Sigmoid colon (tissue), 7 donors: ENCODE measurements at regions of chr10 and their contacts with region 1.

Region 1: DNA sequence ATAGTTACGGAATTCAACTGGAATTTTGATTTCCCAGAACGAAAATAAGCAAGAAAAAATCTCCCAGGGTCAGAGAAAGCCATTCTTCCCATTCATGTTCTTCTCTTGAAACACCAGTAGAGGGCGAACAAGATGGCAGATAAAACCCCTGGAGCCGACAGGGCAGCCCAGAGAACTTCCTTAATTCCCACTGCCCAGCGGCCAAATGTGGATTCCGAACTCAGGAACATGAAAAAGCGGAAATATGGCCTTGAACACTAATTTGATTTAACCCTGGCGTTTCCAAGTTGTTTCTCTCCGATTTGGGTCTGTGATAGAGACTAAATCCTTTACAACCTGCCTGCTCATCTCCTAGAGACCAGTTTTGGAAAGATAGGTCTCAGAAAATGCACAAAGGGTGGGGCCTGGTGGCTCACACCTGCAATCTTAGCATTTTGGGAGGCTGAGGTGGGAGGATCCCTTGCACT is 100.7 kb upstream of the WAC start:
- DNase-seq: peak; percentile 77
- H3K4me3 ChIP-seq: no peak overlapping the region
- H3K27ac ChIP-seq: no peak overlapping the region
- H3K4me1 ChIP-seq: peaks cover 0 to 3% (median 2%) of the 10 kb centered on the region in 4 donors
- H3K27me3 ChIP-seq: no peaks in the 10 kb centered on the region
- CTCF ChIP-seq: peak in 3 of 4 experiments; percentile 67 to 83 (median 68)
- EP300 ChIP-seq: no peak
- POLR2A ChIP-seq: no peak

Region 2: GRCh38 chr10:28587970-28588290 is 155.7 kb after region 1 on chr10:
- intact Hi-C with region 1: loop called (anchors 5 kb)
- DNase-seq: no peak
- H3K4me3 ChIP-seq: no peak overlapping the region
- H3K27ac ChIP-seq: peak overlapping the region; percentile 36 to 62 (median 50)
- H3K4me1 ChIP-seq: peaks cover 0 to 48% (median 29%) of the 10 kb centered on the region in 4 donors
- H3K27me3 ChIP-seq: no peaks in the 10 kb centered on the region
- CTCF ChIP-seq: no peak
- EP300 ChIP-seq: no peak
- POLR2A ChIP-seq: no peak